IMR-90 (cell line): ENCODE measurements at regions of chr15 and their contacts with region 1.

Region 1: GRCh38 chr15:32723171-32723948 is 5.6 kb downstream of the GREM1 start:
- DNase-seq: no peak
- ATAC-seq: no peak
- H3K4me3 ChIP-seq: no peak overlapping the region
- H3K27ac ChIP-seq: peak overlapping the region; percentile 36; the same call in 1 of the 2 replicates
- H3K4me1 ChIP-seq: peaks cover 2% of the 10 kb centered on the region; the same call in 1 of the 2 replicates
- H3K27me3 ChIP-seq: no peaks in the 10 kb centered on the region
- CTCF ChIP-seq: no peak
- POLR2A ChIP-seq: no peak; the same call in 1 of the 2 replicates
- RAD21 ChIP-seq: no peak

Region 2: DNA sequence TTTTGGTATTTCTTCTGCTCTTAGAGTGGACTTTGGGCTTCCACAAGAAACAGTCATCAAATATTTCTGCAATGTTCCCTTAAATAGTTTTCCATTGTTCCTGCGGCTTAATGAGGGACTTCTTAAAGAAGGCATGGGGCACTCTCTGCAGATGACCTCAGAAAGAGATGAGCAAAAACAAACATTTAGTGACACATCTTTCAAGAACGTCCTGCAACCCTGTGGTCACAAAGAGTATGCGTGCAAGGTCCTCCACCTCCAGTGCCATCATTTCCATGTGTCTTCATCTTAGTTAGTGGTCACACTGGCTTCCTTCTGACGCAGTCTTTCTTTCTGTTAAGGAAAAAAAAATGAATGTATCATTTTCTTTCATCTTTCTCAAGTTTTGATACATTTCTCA is 50.7 kb after region 1 on chr15:
- CTCF ChIA-PET with region 1: no interaction called
- POLR2A ChIA-PET with region 1: no interaction called
- dilution Hi-C with region 1: no loop called
- in situ Hi-C with region 1: loop called (anchors 5 kb)
- intact Hi-C with region 1: no loop called
- DNase-seq: peak; percentile 98
- ATAC-seq: peak; percentile 87
- H3K4me3 ChIP-seq: no peak overlapping the region
- H3K27ac ChIP-seq: peak overlapping the region; percentile 84
- H3K4me1 ChIP-seq: peaks cover 17% of the 10 kb centered on the region
- H3K27me3 ChIP-seq: no peaks in the 10 kb centered on the region
- CTCF ChIP-seq: no peak
- POLR2A ChIP-seq: no peak
- RAD21 ChIP-seq: no peak; the same call in 1 of the 2 replicates